Mammary epithelial cell (primary cell): ENCODE measurements at regions of chr22 and their contacts with region 1.

Region 1: DNA sequence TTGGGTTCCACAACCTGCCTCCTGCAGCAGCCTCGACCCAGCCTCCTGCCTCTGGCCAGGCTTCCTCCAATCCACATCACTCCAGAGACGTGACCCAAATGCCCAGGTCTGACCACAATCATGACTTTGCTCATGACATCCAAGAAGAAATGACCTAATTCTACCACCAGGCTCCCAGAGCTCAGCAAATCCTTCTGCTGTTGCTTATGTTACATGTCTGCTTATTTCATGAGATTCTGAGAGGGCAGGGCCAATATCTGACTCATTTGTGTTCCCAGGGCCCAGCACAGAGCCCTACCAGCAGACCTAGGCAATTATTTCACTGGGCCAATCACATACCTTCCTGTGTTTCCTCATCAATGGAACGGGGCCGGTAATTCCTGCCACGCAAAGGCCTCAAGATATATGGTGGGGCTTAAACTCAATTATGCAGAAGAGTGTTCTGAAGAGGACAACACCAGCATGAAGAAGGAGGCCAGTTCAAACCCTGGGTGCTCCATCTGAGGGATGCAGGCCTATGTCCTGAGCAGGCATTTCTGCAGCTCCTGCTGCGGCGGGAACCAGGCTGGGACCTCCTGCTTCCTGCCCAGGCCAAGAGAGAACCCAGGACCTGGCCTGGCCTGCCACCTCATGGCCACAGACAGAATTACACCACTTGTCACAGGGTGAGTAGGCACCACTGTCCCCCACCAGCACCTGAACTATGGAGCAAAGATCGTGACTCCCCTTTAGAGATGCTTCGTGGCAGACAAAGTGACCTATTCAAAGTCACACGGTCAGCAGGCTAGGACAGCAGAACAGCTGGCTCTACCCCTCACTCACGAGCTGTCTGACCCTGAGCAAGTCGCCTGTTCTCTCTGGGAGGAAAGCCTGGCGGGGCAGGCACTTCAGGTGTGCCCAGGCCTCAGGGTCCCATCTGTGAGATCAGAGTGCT is 5.9 kb downstream of the CENPM start:
- DNase-seq: peak; percentile 71
- H3K4me3 ChIP-seq: no peak overlapping the region
- H3K27ac ChIP-seq: peak overlapping the region; percentile 18
- H3K4me1 ChIP-seq: peaks cover 10% of the 10 kb centered on the region
- H3K27me3 ChIP-seq: no peaks in the 10 kb centered on the region
- CTCF ChIP-seq: peak; percentile 86 to 88

Region 2: DNA sequence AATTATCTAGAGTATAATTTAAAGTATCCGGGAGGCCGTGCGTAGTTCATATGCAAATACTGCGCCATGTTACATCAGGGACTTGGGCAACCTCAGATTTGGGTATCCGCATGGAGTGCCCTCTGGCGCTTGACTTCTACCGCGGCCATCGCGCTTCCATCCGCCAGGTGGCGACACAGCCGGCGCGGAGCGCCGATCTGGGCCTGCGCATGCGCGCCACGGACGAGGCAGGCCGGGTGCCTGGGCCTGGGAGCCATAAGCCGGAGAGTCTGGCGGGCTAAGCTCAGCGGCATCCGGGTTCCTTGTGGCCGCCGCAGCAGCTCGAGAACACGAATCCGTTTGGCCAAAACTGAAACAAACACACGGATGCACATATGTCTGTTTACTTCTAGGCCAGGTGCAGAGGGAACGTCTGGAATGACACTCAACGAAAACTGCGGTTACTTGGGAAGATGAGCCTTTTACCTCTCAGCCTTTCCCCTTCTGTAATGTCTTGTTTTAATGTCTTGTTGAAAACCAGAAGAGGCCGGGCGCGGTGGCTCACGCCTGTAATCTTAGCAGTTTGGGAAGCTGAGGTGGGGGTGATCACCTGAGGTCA is 274.3 kb before region 1 on chr22:
- CTCF ChIA-PET with region 1: interaction called, 5 read pairs
- dilution Hi-C with region 1: no loop called
- in situ Hi-C with region 1: no loop called
- intact Hi-C with region 1: loop called (anchors 1 kb)
- DNase-seq: peak; percentile 85
- H3K4me3 ChIP-seq: peak overlapping the region; percentile 2 to 45 (median 21)
- H3K27ac ChIP-seq: peak overlapping the region; percentile 91
- H3K4me1 ChIP-seq: peaks cover 16% of the 10 kb centered on the region
- H3K27me3 ChIP-seq: no peaks in the 10 kb centered on the region
- CTCF ChIP-seq: peak; percentile 94 to 100

Region 3: DNA sequence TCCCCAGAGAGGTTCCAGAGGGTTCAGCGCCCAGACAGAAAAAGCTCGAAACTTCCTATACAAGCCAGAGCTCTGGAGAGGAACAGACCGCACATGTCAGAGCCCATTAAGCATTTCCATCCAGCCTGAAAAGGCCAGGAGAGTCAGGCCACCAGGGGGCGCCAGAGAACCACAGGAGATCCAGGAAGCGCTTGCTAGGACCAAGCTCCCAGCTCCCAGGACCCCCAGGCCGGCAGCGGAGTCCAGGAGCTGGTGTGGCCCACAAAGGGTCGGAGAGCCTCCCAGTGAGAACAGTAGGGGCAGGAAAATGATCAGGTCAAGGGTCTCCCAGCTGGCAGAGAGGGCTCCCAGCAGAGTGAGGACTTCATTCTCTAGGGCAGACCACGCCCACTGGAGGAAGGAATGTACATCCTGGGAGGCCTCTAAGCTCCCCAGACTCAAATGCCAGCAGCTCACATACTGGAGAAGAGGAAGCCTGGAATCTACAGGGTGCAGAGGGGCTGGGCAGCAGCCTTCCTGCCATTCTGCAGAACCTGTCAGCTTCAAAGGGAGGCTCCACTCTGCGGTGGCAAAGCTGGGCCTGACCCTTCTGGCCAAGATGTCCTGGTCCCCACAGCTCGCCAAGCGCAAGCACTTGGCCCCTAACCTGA is 243.8 kb before region 1 on chr22:
- CTCF ChIA-PET with region 1: interaction called, 10 read pairs
- dilution Hi-C with region 1: no loop called
- in situ Hi-C with region 1: loop called (anchors 5 kb)
- intact Hi-C with region 1: loop called (anchors 1 kb)
- DNase-seq: peak; percentile 64
- H3K4me3 ChIP-seq: peak overlapping the region in 1 of 3 experiments; percentile 28
- H3K27ac ChIP-seq: no peak overlapping the region
- H3K4me1 ChIP-seq: peaks cover 17% of the 10 kb centered on the region
- H3K27me3 ChIP-seq: no peaks in the 10 kb centered on the region
- CTCF ChIP-seq: peak; percentile 88 to 98

Region 4: DNA sequence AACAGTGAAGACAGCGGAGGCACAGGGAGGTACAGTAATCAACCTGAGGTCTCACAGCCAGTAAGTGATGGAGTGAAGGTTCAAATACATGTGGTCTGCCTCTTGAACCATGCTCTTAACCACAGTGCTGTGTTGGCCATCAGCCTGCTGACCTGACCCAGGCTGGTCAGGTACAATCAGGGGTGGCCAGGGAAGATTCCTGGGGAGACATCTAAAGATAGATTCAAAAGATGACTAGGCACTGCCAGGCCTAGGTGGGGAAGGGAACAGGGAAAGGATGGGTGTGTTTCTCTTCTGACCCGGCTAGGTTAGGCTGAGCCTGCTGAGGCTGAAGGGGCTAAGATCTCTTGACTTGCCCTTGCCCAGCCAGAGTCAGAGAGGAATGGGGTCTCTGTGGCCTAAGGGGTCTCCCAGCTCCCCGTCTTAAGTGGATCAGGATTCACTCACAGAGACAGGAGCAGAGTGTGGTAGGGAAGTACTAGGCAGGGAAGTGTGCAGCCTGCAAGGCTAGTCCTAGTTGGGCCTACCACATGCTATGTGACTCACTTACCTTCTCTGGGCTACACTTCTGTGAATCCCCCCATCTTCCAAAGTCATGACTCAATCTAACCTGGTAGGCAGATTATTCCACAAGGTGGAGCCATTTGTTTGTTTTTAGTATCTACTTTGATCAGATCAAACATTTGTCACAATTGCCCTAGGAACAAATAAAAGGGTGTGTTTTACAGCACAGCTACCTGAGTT is 118.6 kb before region 1 on chr22:
- CTCF ChIA-PET with region 1: interaction called, 4 read pairs
- dilution Hi-C with region 1: no loop called
- in situ Hi-C with region 1: loop called in 1 of 2 experiments (anchors 5 kb)
- intact Hi-C with region 1: loop called (anchors 1 kb)
- DNase-seq: peak; percentile 86
- H3K4me3 ChIP-seq: no peak overlapping the region
- H3K27ac ChIP-seq: no peak overlapping the region
- H3K4me1 ChIP-seq: peaks cover 9% of the 10 kb centered on the region
- H3K27me3 ChIP-seq: no peaks in the 10 kb centered on the region
- CTCF ChIP-seq: peak; percentile 58 to 63

Region 5: GRCh38 chr22:41832553-41833368 is 108.3 kb before region 1 on chr22 and contains the start of gene SREBF2:
- CTCF ChIA-PET with region 1: no interaction called
- dilution Hi-C with region 1: no loop called
- in situ Hi-C with region 1: loop called in 1 of 2 experiments (anchors 5 kb)
- intact Hi-C with region 1: no loop called
- DNase-seq: peak; percentile 100
- H3K4me3 ChIP-seq: peak within 1 kb of the TSS; percentile 66 to 92 (median 75)
- H3K27ac ChIP-seq: peak within 1 kb of the TSS; percentile 82
- H3K4me1 ChIP-seq: peaks cover 30% of the 10 kb centered on the region
- H3K27me3 ChIP-seq: no peaks in the 10 kb centered on the region
- CTCF ChIP-seq: no peak
- total RNA-seq, gene SREBF2: 100 to 131 TPM

Region 6: DNA sequence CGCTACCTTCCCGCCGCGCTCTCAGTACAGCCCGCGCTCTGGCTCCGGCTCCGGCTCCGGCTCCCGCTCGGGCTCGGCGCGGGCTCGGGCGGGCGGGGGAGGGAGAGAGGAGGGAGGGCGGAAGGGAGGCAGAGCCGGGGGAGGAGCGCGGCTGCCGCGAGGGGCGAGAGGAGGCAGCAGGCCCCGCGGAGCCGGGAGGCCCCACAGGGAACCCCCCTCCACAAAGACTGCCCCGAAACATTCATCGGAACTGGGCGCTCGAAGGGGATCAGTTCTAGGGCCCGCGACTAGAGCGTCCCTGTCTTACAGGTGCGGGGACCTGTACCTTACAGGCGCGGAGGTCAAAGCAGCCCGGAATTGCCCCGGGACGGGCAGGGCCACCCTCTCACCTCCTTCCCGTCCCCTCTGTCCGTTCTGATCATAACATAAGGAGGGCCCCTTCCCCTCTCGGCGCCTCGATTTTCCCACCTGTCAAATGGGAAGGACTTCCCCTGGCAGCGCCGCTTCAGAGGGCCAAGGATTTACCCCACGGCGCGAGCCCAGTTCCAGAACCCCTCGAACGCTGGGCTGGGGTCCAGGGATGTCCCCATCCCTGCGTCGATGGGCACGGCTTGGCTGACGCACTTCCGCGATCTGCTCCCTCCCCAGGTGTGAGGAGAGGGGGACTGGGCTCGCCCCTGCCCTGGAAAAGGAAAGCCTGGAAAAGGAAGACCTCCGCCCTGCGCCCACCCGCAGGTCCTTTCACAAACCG is 25.9 kb before region 1 on chr22 and contains the start of gene SHISA8:
- CTCF ChIA-PET with region 1: interaction called, 17 read pairs
- dilution Hi-C with region 1: no loop called
- in situ Hi-C with region 1: no loop called
- intact Hi-C with region 1: no loop called
- DNase-seq: peak; percentile 32
- H3K4me3 ChIP-seq: peak within 1 kb of the TSS in 1 of 3 experiments; percentile 16
- H3K27ac ChIP-seq: no peak within 1 kb of the TSS
- H3K4me1 ChIP-seq: peaks cover 25% of the 10 kb centered on the region
- H3K27me3 ChIP-seq: peaks cover 40% of the 10 kb centered on the region
- CTCF ChIP-seq: no peak
- total RNA-seq, gene SHISA8: not detected

Region 7: GRCh38 chr22:41983513-41984405 is 42.7 kb after region 1 on chr22:
- CTCF ChIA-PET with region 1: no interaction called
- dilution Hi-C with region 1: no loop called
- in situ Hi-C with region 1: no loop called
- intact Hi-C with region 1: no loop called
- DNase-seq: peak; percentile 57
- H3K4me3 ChIP-seq: no peak overlapping the region
- H3K27ac ChIP-seq: no peak overlapping the region
- H3K4me1 ChIP-seq: peaks cover 11% of the 10 kb centered on the region
- H3K27me3 ChIP-seq: no peaks in the 10 kb centered on the region
- CTCF ChIP-seq: no peak